ENCODE measurements at regions of chr22 and their contacts with region 1.

Region 1: GRCh38 chr22:49807780-49808708 is 19.6 kb downstream of the BRD1 start:
- DNase-seq: peak in 8 of 9 experiments; percentile 30 to 84 (median 61)
- ATAC-seq: peak; percentile 82
- H3K4me3 ChIP-seq: no peak overlapping the region
- H3K4me3 Mint-ChIP-seq: peak overlapping the region; percentile 49
- H3K27ac ChIP-seq: peak overlapping the region; percentile 19 to 44
- H3K27ac Mint-ChIP-seq: peak overlapping the region; percentile 94
- H3K4me1 ChIP-seq: peaks cover 69% of the 10 kb centered on the region
- H3K4me1 Mint-ChIP-seq: peaks cover 77% of the 10 kb centered on the region
- H3K27me3 ChIP-seq: no peaks in the 10 kb centered on the region
- H3K27me3 Mint-ChIP-seq: no peaks in the 10 kb centered on the region
- CTCF ChIP-seq: no peak

Region 2: GRCh38 chr22:49724893-49725474 is 83.1 kb before region 1 on chr22:
- CTCF ChIA-PET with region 1: no interaction called
- POLR2A ChIA-PET with region 1: no interaction called
- intact Hi-C with region 1: no loop called
- DNase-seq: peak; percentile 37 to 83 (median 68)
- ATAC-seq: peak; percentile 84
- H3K4me3 ChIP-seq: peak overlapping the region; percentile 60 to 74
- H3K4me3 Mint-ChIP-seq: peak overlapping the region; percentile 76
- H3K27ac ChIP-seq: peak overlapping the region; percentile 40 to 46
- H3K27ac Mint-ChIP-seq: peak overlapping the region; percentile 60
- H3K4me1 ChIP-seq: peaks cover 20% of the 10 kb centered on the region
- H3K4me1 Mint-ChIP-seq: peaks cover 16% of the 10 kb centered on the region
- H3K27me3 ChIP-seq: peaks cover 9 to 13% of the 10 kb centered on the region in 2 experiments
- H3K27me3 Mint-ChIP-seq: peaks cover 21% of the 10 kb centered on the region
- CTCF ChIP-seq: peak; percentile 74

Region 3: DNA sequence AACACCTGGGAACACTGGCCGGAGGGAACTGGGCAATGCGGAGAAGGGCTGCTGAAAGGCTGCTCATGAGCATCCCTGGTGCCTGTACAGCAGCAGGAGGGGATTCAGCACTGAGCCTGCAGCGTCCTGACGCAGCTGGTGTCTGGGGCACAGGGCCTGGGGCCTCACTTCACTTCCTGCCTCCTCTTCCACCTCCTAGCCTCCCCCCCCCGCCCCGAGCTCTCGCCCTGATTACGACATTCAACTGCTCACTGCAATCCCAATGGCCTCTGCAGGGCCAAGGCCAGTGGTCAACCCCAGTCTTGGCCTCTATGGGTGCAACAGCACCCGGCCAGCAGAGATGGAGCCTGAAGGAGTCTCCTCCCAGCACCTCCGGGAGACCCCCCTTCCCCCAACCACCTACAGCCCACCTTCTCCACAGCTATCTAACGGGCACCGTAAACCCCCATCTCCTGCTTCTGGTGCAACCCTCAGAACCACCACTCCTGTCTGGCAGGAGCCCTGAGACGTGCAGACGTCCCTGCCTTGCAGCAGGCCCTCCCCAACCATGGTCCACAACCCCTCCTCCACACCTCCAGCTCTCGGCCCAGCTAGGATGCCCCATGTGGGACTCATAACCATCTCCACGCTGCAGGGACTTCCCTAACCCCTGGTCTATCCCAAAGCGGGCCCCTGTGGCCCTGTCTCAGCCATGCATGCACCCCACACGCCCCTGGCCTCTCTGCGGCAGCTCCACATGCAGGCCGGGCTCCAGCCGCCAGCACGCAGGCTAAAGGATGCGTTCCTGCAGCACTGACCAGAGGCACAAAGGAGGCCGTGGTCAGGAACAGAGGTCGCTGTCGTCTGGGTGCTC is 18.5 kb before region 1 on chr22:
- CTCF ChIA-PET with region 1: no interaction called
- POLR2A ChIA-PET with region 1: interaction called, 3 read pairs
- intact Hi-C with region 1: loop called (anchors 1 to 2 kb)
- DNase-seq: peak; percentile 16 to 73 (median 50)
- ATAC-seq: peak; percentile 83
- H3K4me3 ChIP-seq: peak overlapping the region; percentile 12 to 54
- H3K4me3 Mint-ChIP-seq: peak overlapping the region; percentile 76
- H3K27ac ChIP-seq: peak overlapping the region; percentile 49
- H3K27ac Mint-ChIP-seq: peak overlapping the region; percentile 90
- H3K4me1 ChIP-seq: peaks cover 28% of the 10 kb centered on the region
- H3K4me1 Mint-ChIP-seq: peaks cover 48% of the 10 kb centered on the region
- H3K27me3 ChIP-seq: no peaks in the 10 kb centered on the region
- H3K27me3 Mint-ChIP-seq: no peaks in the 10 kb centered on the region
- CTCF ChIP-seq: no peak

Region 4: GRCh38 chr22:49838771-49839717 is 31.0 kb after region 1 on chr22:
- CTCF ChIA-PET with region 1: no interaction called
- POLR2A ChIA-PET with region 1: no interaction called
- intact Hi-C with region 1: loop called in 1 of 2 experiments (anchors 1 kb)
- DNase-seq: peak; percentile 75 to 98 (median 87)
- ATAC-seq: peak; percentile 94
- H3K4me3 ChIP-seq: peak overlapping the region; percentile 39 to 65
- H3K4me3 Mint-ChIP-seq: peak overlapping the region; percentile 66
- H3K27ac ChIP-seq: peak overlapping the region; percentile 84 to 86
- H3K27ac Mint-ChIP-seq: peak overlapping the region; percentile 97
- H3K4me1 ChIP-seq: peaks cover 17% of the 10 kb centered on the region
- H3K4me1 Mint-ChIP-seq: peaks cover 23% of the 10 kb centered on the region
- H3K27me3 ChIP-seq: no peaks in the 10 kb centered on the region
- H3K27me3 Mint-ChIP-seq: no peaks in the 10 kb centered on the region
- CTCF ChIP-seq: no peak

Measured in CD8-positive, alpha-beta T cell (primary cell).